Mammary epithelial cell (primary cell): ENCODE measurements at regions of chr1 and their contacts with region 1.

Region 1: GRCh38 chr1:21176586-21177555 is at the start of gene EIF4G3:
- DNase-seq: peak; percentile 93
- H3K4me3 ChIP-seq: peak within 1 kb of the TSS; percentile 86 to 97 (median 95)
- H3K27ac ChIP-seq: peak within 1 kb of the TSS; percentile 81
- H3K4me1 ChIP-seq: peaks cover 8% of the 10 kb centered on the region
- H3K27me3 ChIP-seq: no peaks in the 10 kb centered on the region
- CTCF ChIP-seq: no peak
- total RNA-seq, gene EIF4G3: 50.3 to 79.9 TPM

Region 2: DNA sequence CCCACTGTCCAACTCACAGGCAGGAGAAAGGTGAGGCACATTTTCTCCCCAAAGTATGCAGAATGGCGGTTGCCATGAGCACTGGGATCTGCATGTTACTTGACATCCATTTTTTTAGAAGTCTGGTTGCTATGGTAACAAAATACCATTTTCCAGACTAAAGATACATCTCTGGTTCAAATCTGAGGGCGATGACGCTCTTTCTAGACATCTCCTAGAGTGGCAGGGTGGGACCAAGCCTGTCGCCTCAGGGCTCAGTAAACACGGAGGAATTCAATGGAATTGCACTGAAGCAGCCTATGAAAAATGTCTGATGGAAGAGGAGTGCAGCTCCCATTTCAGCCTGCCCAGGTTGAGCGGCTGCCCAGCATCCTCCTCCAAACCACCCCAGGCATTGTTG is 646.0 kb before region 1 on chr1:
- CTCF ChIA-PET with region 1: no interaction called
- dilution Hi-C with region 1: no loop called
- in situ Hi-C with region 1: loop called in 1 of 2 experiments (anchors 25 kb)
- intact Hi-C with region 1: no loop called
- DNase-seq: peak; percentile 28
- H3K4me3 ChIP-seq: no peak overlapping the region
- H3K27ac ChIP-seq: no peak overlapping the region
- H3K4me1 ChIP-seq: no peaks in the 10 kb centered on the region
- H3K27me3 ChIP-seq: no peaks in the 10 kb centered on the region
- CTCF ChIP-seq: no peak

Region 3: GRCh38 chr1:21072721-21073120 is 104.2 kb before region 1 on chr1:
- CTCF ChIA-PET with region 1: no interaction called
- dilution Hi-C with region 1: no loop called
- in situ Hi-C with region 1: no loop called
- intact Hi-C with region 1: loop called (anchors 5 kb)
- DNase-seq: no peak
- H3K4me3 ChIP-seq: no peak overlapping the region
- H3K27ac ChIP-seq: no peak overlapping the region
- H3K4me1 ChIP-seq: no peaks in the 10 kb centered on the region
- H3K27me3 ChIP-seq: no peaks in the 10 kb centered on the region
- CTCF ChIP-seq: no peak

Region 4: DNA sequence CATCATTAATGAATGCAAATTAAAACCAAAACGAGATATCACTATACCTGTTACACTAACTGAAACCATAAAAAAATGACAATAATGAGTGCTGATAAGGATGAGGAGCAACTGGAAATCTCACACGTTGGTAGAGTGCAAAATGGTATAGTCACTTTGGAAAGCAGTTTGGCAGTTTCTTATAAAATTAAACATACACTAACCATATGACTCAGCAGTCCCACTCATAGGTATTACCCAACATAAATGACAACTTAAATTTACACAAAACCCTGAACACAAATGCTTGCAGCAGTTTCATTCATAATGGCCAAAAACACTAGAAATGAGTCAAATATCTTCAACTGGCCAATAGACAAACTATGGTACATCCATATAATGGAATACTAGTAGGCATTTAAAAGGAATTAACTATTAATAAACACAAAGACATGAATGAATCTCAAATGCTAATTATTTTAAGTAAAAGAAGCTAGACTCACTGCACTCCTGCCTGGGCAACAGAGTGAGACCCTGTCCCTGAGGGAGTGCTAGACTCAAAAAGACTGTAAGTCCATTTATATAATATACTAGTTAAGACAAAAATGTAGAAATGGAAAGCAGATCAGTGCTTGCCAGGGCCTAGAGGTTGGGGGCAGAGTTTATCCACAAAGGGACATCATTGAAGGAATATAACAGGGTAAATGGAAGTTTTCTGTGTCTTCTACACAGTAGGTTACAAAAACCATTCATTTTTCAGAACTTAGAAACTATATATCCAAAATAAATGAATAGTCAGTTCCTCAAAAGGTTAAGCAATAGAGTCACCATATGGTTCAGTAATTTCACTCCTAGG is 77.6 kb before region 1 on chr1:
- CTCF ChIA-PET with region 1: no interaction called
- dilution Hi-C with region 1: no loop called
- in situ Hi-C with region 1: no loop called
- intact Hi-C with region 1: loop called (anchors 10 kb)
- DNase-seq: peak; percentile 72
- H3K4me3 ChIP-seq: no peak overlapping the region
- H3K27ac ChIP-seq: peak overlapping the region; percentile 26
- H3K4me1 ChIP-seq: peaks cover 18% of the 10 kb centered on the region
- H3K27me3 ChIP-seq: no peaks in the 10 kb centered on the region
- CTCF ChIP-seq: no peak

Region 5: GRCh38 chr1:21149862-21150432 is 26.9 kb before region 1 on chr1:
- CTCF ChIA-PET with region 1: no interaction called
- dilution Hi-C with region 1: no loop called
- in situ Hi-C with region 1: no loop called
- intact Hi-C with region 1: loop called (anchors 1 kb)
- DNase-seq: peak; percentile 94
- H3K4me3 ChIP-seq: peak overlapping the region in 1 of 3 experiments; percentile 11
- H3K27ac ChIP-seq: peak overlapping the region; percentile 94
- H3K4me1 ChIP-seq: peaks cover 28% of the 10 kb centered on the region
- H3K27me3 ChIP-seq: no peaks in the 10 kb centered on the region
- CTCF ChIP-seq: no peak